H1 (cell line): ENCODE measurements at regions of chr2 and their contacts with region 1.

Region 1: GRCh38 chr2:85132834-85133637 is at the start of gene TCF7L1:
- DNase-seq: peak; percentile 51 to 96
- H3K4me3 ChIP-seq: peak within 1 kb of the TSS; percentile 90 to 97 (median 93)
- H3K27ac ChIP-seq: peak within 1 kb of the TSS; percentile 84
- H3K4me1 ChIP-seq: peaks cover 10 to 17% (median 12%) of the 10 kb centered on the region in 4 experiments
- H3K27me3 ChIP-seq: no peaks in the 10 kb centered on the region
- CTCF ChIP-seq: peak; percentile 81 to 84 (median 84)
- EP300 ChIP-seq: no peak
- POLR2A ChIP-seq: peak; percentile 53 to 55; a peak in 2 of 3 replicates
- RAD21 ChIP-seq: peak; percentile 83 to 90
- total RNA-seq, gene TCF7L1: 108 and 110 TPM in 2 replicates

Region 2: GRCh38 chr2:85119900-85120299 is 13.1 kb before region 1 on chr2:
- CTCF ChIA-PET with region 1: interaction called, 12 read pairs
- POLR2A ChIA-PET with region 1: interaction called, 16 read pairs
- DNase-seq: peak; percentile 54 to 61
- H3K4me3 ChIP-seq: no peak overlapping the region
- H3K27ac ChIP-seq: no peak overlapping the region
- H3K4me1 ChIP-seq: peaks cover 0 to 3% (median under 1%) of the 10 kb centered on the region in 4 experiments; a peak in 1 of 7 replicates
- H3K27me3 ChIP-seq: peaks cover 2 to 24% (median 20%) of the 10 kb centered on the region in 4 experiments
- CTCF ChIP-seq: peak in 1 of 3 experiments; percentile 9; a peak in 1 of 4 replicates
- EP300 ChIP-seq: peak in 1 of 2 experiments; percentile 54; a peak in 1 of 3 replicates
- POLR2A ChIP-seq: no peak
- RAD21 ChIP-seq: peak; percentile 17 to 28; a peak in 2 of 4 replicates

Region 3: GRCh38 chr2:85175369-85176299 is 42.6 kb after region 1 on chr2:
- CTCF ChIA-PET with region 1: interaction called, 12 read pairs
- POLR2A ChIA-PET with region 1: interaction called, 15 read pairs
- DNase-seq: no peak
- H3K4me3 ChIP-seq: no peak overlapping the region
- H3K27ac ChIP-seq: 0 out of 2 replicates have a peak overlapping the region, but pooled peaks have one; percentile 9
- H3K4me1 ChIP-seq: peaks cover 26 to 45% (median 34%) of the 10 kb centered on the region in 4 experiments
- H3K27me3 ChIP-seq: no peaks in the 10 kb centered on the region
- CTCF ChIP-seq: no peak
- EP300 ChIP-seq: no peak
- POLR2A ChIP-seq: no peak
- RAD21 ChIP-seq: no peak

Region 4: DNA sequence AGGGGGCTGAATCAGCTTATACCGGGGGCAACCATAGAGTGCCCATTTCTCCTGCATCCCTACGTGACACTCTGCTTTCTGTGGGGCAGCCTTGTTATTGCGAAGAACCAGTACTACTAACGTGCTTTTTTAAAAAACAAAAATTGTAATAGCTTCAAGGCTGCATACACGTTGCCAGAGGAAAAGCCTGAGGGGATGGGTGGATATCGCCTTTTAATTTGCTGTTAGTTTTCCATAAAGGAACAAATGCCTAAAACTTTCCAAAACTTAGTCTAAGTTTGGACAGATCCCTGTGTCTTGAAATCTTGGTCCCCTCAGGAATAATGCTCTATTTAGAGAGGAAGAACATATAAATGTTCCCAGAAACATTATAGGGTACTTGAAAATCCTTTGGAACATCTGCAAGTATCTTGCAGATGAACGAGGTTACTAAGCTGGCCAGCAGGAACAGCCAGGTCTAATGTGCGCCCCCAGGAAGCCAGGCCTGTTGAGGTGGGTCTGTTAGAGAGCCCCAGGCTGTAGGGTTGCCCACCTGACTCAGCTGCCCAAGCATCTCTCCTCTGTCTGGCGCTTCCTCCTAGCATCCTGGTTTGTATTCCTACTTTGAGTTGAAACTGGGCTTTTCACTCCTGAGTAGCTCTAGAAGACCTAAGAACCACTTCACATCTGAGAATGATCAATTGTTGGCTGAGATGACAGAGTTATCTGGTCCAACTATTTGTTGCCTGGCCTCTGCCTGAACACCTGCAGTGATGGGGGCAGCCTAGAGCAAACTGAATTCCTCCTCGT is 97.8 kb after region 1 on chr2:
- CTCF ChIA-PET with region 1: interaction called, 8 read pairs
- POLR2A ChIA-PET with region 1: interaction called, 20 read pairs
- DNase-seq: no peak
- H3K4me3 ChIP-seq: peak overlapping the region in 1 of 4 experiments; percentile 35; a peak in 1 of 8 replicates
- H3K27ac ChIP-seq: peak overlapping the region; percentile 42; the same call in 1 of the 2 replicates
- H3K4me1 ChIP-seq: peaks cover 26 to 45% (median 35%) of the 10 kb centered on the region in 4 experiments
- H3K27me3 ChIP-seq: no peaks in the 10 kb centered on the region
- CTCF ChIP-seq: peak in 2 of 3 experiments; percentile 32 to 62; a peak in 3 of 4 replicates
- EP300 ChIP-seq: no peak
- POLR2A ChIP-seq: no peak
- RAD21 ChIP-seq: no peak

Region 5: GRCh38 chr2:85266146-85267041 is 133.4 kb after region 1 on chr2:
- CTCF ChIA-PET with region 1: interaction called, 14 read pairs
- POLR2A ChIA-PET with region 1: interaction called, 5 read pairs
- DNase-seq: peak in 1 of 2 experiments; percentile 91
- H3K4me3 ChIP-seq: no peak overlapping the region
- H3K27ac ChIP-seq: no peak overlapping the region
- H3K4me1 ChIP-seq: peaks cover 13 to 23% (median 21%) of the 10 kb centered on the region in 4 experiments; a peak in 6 of 7 replicates
- H3K27me3 ChIP-seq: no peaks in the 10 kb centered on the region
- CTCF ChIP-seq: peak; percentile 83 to 85 (median 85)
- EP300 ChIP-seq: no peak
- POLR2A ChIP-seq: no peak
- RAD21 ChIP-seq: peak; percentile 62 to 76

Region 6: GRCh38 chr2:85308896-85309555 is 176.0 kb after region 1 on chr2:
- CTCF ChIA-PET with region 1: no interaction called
- POLR2A ChIA-PET with region 1: interaction called, 12 read pairs
- DNase-seq: no peak
- H3K4me3 ChIP-seq: no peak overlapping the region
- H3K27ac ChIP-seq: no peak overlapping the region
- H3K4me1 ChIP-seq: peaks cover 0 to 8% (median 2%) of the 10 kb centered on the region in 4 experiments; a peak in 5 of 7 replicates
- H3K27me3 ChIP-seq: no peaks in the 10 kb centered on the region
- CTCF ChIP-seq: no peak
- EP300 ChIP-seq: no peak
- POLR2A ChIP-seq: no peak
- RAD21 ChIP-seq: no peak

Region 7: DNA sequence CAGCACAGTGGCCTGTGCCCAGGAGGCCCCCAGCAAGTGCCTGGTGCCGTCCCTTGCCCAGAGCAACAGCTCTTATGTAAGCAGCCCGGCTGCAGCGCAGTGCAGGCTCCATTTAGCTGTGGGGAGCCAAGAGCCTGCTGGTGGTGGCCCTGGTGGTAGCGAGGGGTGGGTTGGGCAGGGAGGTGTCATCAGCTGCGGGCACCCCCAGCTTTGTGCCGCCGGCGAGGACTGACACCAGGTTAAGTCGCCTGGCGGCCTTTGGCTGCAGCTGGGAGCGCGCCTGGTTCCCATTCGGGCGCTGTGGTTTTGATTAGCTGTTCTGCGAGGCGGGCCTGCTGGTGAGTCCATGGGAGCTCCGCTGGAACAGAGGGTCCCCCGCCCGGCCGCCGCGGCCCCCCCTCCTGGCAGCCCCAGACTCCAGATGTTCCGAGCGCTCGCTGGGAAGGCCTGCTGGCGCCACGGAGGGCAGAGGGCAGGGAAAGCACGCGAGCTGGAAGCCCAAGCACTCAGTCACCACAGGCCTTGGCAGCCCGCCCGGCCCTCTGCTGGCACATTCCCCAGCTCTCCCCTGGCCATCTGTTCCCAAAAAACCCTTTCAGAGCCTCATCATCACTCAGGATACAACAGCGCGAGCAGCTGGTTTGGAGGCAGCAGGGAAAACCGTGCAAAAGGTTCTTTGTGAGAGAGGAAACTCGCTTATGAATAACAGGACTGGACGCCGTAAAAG is 639.1 kb after region 1 on chr2:
- CTCF ChIA-PET with region 1: no interaction called
- POLR2A ChIA-PET with region 1: no interaction called
- DNase-seq: peak in 1 of 2 experiments; percentile 66
- H3K4me3 ChIP-seq: peak overlapping the region in 2 of 4 experiments; percentile 5 to 7; a peak in 2 of 8 replicates
- H3K27ac ChIP-seq: no peak overlapping the region
- H3K4me1 ChIP-seq: peaks cover 0 to 39% (median 26%) of the 10 kb centered on the region in 4 experiments; a peak in 6 of 7 replicates
- H3K27me3 ChIP-seq: peaks cover 0 to 27% (median 17%) of the 10 kb centered on the region in 4 experiments; a peak in 6 of 7 replicates
- CTCF ChIP-seq: peak in 2 of 3 experiments; percentile 7 to 29; a peak in 2 of 4 replicates
- EP300 ChIP-seq: no peak
- POLR2A ChIP-seq: no peak
- RAD21 ChIP-seq: peak in 1 of 2 experiments; percentile 4; a peak in 2 of 4 replicates